Posterior vena cava (tissue), 2 donors: ENCODE measurements at regions of chr5 and their contacts with region 1.

Region 1: GRCh38 chr5:153678617-153679329 is 188.3 kb downstream of the GRIA1 start:
- DNase-seq: no peak

Region 2: DNA sequence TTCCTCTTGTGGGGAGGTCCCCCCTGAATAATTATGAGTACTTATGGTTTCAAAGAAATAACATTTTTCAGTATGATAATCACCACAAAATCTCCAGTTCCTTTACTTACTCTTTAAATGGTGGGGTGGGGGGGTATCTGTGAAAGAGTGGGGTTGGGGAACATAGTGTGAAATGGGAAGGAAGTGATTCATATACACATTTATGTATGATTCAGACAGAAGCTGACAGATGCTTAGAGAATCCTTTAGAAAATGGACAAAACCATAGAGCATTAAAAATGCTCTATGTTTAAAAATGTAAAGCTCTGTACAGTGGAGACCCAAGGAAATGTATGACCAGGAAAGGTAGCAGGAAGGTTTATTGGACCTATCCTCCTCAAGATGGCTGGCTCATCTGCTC is 455.8 kb before region 1 on chr5:
- intact Hi-C with region 1: no loop called
- DNase-seq: no peak

Region 3: DNA sequence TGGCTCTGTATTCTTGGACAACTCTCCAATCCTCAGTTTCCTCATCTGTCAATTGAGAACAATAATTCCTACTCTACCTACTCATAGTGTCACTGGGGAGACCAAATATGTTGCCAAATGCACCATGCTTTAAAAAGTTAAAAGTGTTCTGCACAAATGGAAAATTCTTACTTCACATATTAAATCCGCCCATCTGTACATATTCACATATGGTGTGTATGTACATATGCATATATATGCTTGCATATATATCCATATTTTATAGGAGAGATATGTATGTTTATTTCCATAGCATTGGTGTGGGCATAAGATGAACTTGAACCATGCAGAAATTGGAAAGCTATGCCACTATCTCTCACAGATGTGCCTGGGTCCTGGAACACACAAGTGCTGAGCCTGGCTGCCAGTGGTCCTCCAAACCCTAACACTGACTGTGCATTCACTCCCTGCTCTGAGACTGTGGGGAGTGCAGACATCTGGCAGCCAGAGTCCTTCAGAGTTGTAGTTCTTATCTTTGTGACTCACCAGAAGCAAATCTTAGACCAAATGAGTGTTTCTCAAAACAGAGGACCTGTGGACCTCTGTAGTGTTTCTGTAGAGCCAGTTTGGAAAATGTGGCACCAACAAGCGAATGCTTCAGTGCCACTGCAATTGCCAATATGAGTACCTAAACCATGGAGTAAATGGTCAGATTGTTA is 19.6 kb before region 1 on chr5:
- intact Hi-C with region 1: no loop called
- DNase-seq: no peak

Region 4: GRCh38 chr5:153700940-153701339 is 22.2 kb after region 1 on chr5:
- intact Hi-C with region 1: no loop called
- DNase-seq: no peak

Region 5: DNA sequence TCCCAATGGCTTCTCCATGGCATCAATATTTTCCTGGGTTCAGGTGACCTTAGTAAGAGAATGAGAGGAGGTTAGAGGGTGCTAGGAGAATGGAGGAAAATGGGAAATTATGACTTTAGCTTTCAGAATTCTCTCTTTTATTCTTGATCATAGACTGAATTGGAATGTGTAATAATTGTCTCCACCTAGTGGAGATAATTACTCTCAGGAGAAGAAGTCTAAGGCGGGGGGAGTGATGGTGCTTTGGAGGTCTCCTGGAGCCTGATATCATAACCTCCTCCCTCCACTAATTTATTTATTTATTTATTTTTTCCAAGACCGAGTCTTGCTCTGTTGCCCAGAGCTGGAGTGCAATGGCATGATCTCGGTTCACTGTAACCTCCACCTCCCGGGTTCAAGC is 33.0 kb after region 1 on chr5:
- intact Hi-C with region 1: no loop called
- DNase-seq: no peak

Region 6: DNA sequence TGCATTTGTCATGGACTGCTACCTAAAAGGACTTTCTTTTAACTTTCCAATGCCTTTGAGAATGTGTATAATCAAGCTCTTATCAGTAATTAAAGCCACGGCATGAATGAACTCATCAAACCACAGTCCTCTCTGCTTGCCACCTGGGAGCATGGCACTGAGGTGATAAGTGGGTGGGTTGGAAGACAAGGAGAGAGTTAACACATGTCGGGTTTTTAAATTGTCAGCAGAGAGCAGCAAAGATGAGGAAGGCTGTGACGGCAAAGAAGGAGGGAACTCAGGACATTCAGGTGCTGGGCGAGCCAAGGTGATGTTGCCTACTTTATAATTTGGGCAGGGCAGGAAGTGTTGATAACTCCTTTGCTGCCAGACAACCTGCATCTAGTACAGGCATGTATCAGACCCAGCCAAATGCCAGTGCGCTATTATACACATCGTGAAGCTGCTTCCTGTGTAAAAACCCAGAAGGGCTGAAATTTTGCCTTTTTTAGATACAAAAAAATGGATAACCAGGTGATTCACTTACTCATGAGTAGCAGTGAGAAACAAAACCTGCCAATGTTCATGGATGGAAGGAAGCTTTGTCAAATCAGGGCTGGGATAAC is 1603.8 kb after region 1 on chr5:
- intact Hi-C with region 1: loop called in 1 of 2 experiments (anchors 5 kb)
- DNase-seq: no peak